ENCODE measurements at regions of chr6 and their contacts with region 1.

Region 1: DNA sequence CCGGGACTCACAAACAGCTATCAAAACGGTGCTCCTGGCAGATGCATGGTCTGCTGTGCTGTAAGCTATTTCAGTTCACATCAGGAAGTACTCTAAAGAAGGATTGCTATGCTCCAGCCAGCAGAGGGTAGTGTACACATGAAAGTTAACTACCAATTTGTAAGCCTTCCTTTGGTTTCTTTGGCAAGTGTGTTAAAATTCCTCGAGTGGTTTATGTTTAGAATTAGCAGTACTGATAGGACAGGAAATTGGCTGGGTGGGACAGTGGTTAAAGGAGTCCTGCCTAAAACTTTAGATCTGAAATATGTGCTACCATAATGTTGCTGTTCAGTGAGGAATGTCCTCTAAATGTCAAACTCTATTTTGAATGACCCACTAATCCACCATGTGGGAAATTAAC is 47.4 kb downstream of the TRMT11 start:
- DNase-seq: no peak
- ATAC-seq: peak; percentile 55
- H3K4me3 Mint-ChIP-seq: no peak overlapping the region
- H3K27ac Mint-ChIP-seq: no peak overlapping the region
- H3K4me1 Mint-ChIP-seq: no peaks in the 10 kb centered on the region
- H3K27me3 Mint-ChIP-seq: no peaks in the 10 kb centered on the region

Region 2: DNA sequence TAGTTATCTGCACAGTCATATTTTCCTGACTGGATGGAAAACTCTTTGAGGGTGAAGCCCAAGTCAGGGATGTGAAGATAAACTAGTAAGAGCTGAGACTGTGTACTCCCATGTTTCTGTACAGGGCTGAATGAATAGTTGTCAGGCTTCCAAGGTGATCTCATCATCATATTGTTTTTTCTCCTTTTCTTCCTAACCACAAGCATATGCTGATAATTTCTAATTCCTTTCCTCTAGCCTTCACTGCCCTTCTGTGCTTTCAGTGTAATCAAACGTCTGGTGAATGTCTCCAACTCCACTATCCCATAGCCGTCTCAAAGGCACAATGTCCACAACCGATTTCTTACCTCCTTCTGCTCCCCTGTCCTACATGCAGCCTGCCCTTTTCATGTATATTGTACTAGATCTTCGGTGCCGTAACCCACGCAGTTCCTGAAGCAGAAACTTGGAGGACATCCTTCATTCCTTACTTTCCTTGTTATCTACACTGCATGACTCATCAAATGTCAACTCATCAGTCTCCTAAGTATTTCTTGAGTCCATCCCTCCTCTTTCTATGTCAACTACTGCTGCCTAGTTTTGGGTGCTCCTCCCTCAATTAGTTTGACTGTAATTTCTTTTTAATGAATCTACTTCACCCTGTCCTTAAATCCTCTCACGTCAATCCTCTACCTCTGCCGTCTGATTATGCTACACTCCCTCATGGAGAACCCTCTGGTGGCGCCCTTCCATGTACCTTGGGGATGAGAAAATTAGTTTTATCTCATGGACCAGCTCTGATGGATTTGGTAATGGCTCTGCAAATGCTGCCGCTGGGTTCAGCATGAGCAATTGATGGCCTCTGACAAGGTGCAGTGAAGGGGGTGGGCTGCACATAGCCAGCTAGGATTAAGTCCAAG is 221.1 kb before region 1 on chr6:
- CTCF ChIA-PET with region 1: no interaction called
- POLR2A ChIA-PET with region 1: no interaction called
- intact Hi-C with region 1: no loop called
- DNase-seq: no peak
- ATAC-seq: peak; percentile 35
- H3K4me3 Mint-ChIP-seq: no peak overlapping the region
- H3K27ac Mint-ChIP-seq: no peak overlapping the region
- H3K4me1 Mint-ChIP-seq: peaks cover 70% of the 10 kb centered on the region
- H3K27me3 Mint-ChIP-seq: no peaks in the 10 kb centered on the region

Region 3: GRCh38 chr6:126657561-126658175 is 624.0 kb after region 1 on chr6:
- CTCF ChIA-PET with region 1: no interaction called
- POLR2A ChIA-PET with region 1: no interaction called
- intact Hi-C with region 1: loop called in 1 of 2 experiments (anchors 10 kb)
- DNase-seq: no peak
- ATAC-seq: no peak
- H3K4me3 Mint-ChIP-seq: no peak overlapping the region
- H3K27ac Mint-ChIP-seq: no peak overlapping the region
- H3K4me1 Mint-ChIP-seq: no peaks in the 10 kb centered on the region
- H3K27me3 Mint-ChIP-seq: no peaks in the 10 kb centered on the region

Region 4: DNA sequence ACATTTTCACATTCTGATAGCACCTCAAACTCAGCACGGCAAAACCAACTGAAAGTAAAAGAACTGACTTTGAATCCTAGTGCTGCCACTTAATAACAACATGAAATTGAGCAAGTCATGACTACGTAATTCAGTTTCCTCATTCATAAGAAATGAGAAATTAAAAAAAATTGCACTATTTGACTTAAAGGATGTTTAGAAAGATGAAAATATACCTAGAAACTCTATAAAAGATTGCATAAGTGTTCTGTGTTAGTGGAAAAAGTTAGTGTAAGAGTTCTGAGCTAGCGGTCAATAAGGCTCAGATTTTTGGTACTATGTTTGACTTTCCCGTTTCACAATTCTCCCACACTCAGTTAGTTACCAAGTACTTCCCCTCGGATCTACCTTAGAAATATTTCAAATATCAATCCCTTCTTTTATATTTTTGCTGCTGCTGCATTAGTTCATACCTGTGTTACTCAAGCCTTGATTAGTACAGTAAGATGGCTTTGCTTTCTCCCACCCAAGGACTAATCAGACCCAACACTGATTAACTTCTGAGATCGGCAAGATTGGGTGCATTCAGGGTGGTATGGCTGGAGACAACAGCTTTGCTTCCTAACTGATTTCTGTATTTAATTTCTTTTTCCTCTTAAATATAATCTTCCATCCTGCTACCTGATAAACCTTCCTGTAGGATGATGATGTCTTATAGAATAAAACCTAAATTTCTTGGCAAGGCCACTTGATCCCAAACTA is 1283.9 kb after region 1 on chr6:
- CTCF ChIA-PET with region 1: no interaction called
- POLR2A ChIA-PET with region 1: interaction called, 11 read pairs
- intact Hi-C with region 1: no loop called
- DNase-seq: no peak
- ATAC-seq: no peak
- H3K4me3 Mint-ChIP-seq: no peak overlapping the region
- H3K27ac Mint-ChIP-seq: no peak overlapping the region
- H3K4me1 Mint-ChIP-seq: peaks cover 13% of the 10 kb centered on the region
- H3K27me3 Mint-ChIP-seq: no peaks in the 10 kb centered on the region